Right cardiac atrium (tissue), 5 donors: ENCODE measurements at regions of chr1 and their contacts with region 1.

Region 1: GRCh38 chr1:184483101-184483683 is 96.4 kb downstream of the C1orf21 start:
- DNase-seq: peak; percentile 39 to 68 (median 56)
- ATAC-seq: peak; percentile 45 to 71
- H3K4me3 ChIP-seq: no peak overlapping the region
- H3K27ac ChIP-seq: peak overlapping the region; percentile 85
- H3K4me1 ChIP-seq: peaks cover 43% of the 10 kb centered on the region
- H3K27me3 ChIP-seq: no peaks in the 10 kb centered on the region

Region 2: GRCh38 chr1:184386312-184387068 is 96.7 kb before region 1 on chr1 and contains the start of gene C1orf21:
- intact Hi-C with region 1: loop called in 2 of 4 experiments (anchors 10 kb)
- DNase-seq: peak; percentile 93 to 97 (median 96)
- ATAC-seq: peak; percentile 97 to 98
- H3K4me3 ChIP-seq: peak within 1 kb of the TSS; percentile 88
- H3K27ac ChIP-seq: peak within 1 kb of the TSS; percentile 95
- H3K4me1 ChIP-seq: peaks cover 2% of the 10 kb centered on the region
- H3K27me3 ChIP-seq: no peaks in the 10 kb centered on the region
- total RNA-seq, gene C1orf21: 70.4 to 93.5 (median 78.9) TPM

Region 3: DNA sequence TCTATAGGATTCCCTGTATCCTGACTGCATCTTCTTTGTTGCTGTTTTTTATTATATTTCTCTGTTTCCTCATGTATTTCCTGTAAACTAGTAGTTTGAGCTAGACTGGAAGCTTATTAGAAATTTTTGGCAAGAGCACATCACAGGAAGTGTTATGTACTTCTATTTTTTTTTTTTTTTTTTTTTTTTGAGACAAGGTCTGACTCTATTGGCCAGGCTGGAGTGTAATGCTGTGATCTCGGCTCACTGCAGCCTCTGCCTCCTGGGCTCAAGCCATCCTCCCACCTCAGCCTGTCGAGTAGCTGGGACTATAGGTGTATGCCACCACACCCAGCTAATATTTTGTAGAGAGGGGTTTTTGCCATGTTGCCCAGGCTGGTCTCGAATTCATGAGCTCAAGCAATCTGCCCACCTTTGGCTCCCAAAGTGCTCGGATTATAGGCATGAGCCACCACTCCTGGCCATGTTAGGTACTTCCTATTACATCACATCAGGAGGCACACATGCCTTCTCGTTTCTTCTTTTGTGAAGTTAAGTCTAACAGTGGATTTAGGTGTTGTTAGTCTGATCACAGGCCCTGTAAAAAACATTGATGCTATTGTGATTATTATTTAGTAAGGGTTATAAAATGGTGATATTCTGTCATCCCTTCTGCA is 83.9 kb before region 1 on chr1:
- intact Hi-C with region 1: loop called in 1 of 4 experiments (anchors 10 kb)
- DNase-seq: no peak
- ATAC-seq: peak; percentile 45 to 60
- H3K4me3 ChIP-seq: no peak overlapping the region
- H3K27ac ChIP-seq: no peak overlapping the region
- H3K4me1 ChIP-seq: peaks cover 12% of the 10 kb centered on the region
- H3K27me3 ChIP-seq: no peaks in the 10 kb centered on the region

Region 4: GRCh38 chr1:184524248-184524647 is 41.1 kb after region 1 on chr1:
- intact Hi-C with region 1: no loop called
- DNase-seq: no peak
- ATAC-seq: no peak
- H3K4me3 ChIP-seq: no peak overlapping the region
- H3K27ac ChIP-seq: no peak overlapping the region
- H3K4me1 ChIP-seq: no peaks in the 10 kb centered on the region
- H3K27me3 ChIP-seq: no peaks in the 10 kb centered on the region